B cell (primary cell): ENCODE measurements at regions of chr11 and their contacts with region 1.

Region 1: GRCh38 chr11:111926505-111927391 is 8.0 kb downstream of the C11orf52 start:
- DNase-seq: peak; percentile 96
- ATAC-seq: peak; percentile 90
- H3K4me3 ChIP-seq: peak overlapping the region; percentile 51 to 82 (median 66)
- H3K4me3 Mint-ChIP-seq: peak overlapping the region; percentile 92
- H3K27ac ChIP-seq: peak overlapping the region; percentile 67 to 89
- H3K27ac Mint-ChIP-seq: peak overlapping the region; percentile 93
- H3K4me1 ChIP-seq: peaks cover 9 to 17% of the 10 kb centered on the region in 2 donors
- H3K4me1 Mint-ChIP-seq: peaks cover 16% of the 10 kb centered on the region
- H3K27me3 ChIP-seq: peaks cover 0 to 4% (median 0%) of the 10 kb centered on the region in 4 experiments
- H3K27me3 Mint-ChIP-seq: peaks cover 9% of the 10 kb centered on the region
- CTCF ChIP-seq: no peak

Region 2: DNA sequence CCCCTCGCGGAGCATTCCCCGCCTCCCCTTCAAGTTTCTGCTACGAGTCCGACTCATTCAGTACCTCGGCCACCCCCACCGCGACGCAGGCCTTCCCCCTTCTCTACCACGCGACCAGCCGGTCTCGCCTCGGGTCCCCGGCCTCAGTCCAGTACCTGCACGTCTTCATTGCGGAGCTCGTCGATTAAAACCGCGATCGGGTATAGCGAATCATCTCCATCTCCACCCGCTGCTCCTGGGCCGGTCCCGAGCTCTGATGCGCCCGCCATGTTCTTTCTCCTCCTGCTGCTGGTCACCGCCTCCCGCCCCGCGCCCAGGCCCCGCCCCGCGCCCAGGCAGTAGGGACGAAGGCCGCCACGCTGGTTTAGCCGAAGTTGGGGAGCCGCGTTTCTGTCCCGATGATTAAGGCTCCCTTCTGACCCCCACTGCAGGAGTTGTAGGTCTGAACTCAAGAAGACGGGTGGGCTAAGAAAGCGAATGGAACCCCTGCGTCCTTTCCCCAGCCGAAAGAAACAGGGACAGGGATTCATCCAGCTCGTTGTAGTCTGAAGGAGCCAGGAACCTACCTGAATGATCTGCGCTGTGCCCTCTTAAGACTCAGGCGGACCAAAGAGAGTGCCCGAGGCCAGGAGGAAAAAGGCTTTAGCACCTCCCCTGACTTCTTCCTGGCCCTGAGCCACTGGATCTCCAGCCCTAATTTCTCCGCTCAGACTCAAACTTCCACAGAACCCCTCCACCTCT is 160.5 kb before region 1 on chr11 and contains the start of gene PPP2R1B:
- CTCF ChIA-PET with region 1: interaction called, 3 read pairs
- POLR2A ChIA-PET with region 1: no interaction called
- intact Hi-C with region 1: loop called (anchors 1 kb)
- DNase-seq: peak; percentile 88
- ATAC-seq: peak; percentile 97
- H3K4me3 ChIP-seq: peak within 1 kb of the TSS; percentile 74 to 97 (median 90)
- H3K4me3 Mint-ChIP-seq: peak within 1 kb of the TSS; percentile 100
- H3K27ac ChIP-seq: peak within 1 kb of the TSS; percentile 53 to 77
- H3K27ac Mint-ChIP-seq: peak within 1 kb of the TSS; percentile 97
- H3K4me1 ChIP-seq: peaks cover 9 to 16% of the 10 kb centered on the region in 2 donors
- H3K4me1 Mint-ChIP-seq: peaks cover 37% of the 10 kb centered on the region
- H3K27me3 ChIP-seq: no peaks in the 10 kb centered on the region
- H3K27me3 Mint-ChIP-seq: no peaks in the 10 kb centered on the region
- CTCF ChIP-seq: no peak
- total RNA-seq, gene PPP2R1B: 35.6 and 37.0 TPM in 2 replicates

Region 3: DNA sequence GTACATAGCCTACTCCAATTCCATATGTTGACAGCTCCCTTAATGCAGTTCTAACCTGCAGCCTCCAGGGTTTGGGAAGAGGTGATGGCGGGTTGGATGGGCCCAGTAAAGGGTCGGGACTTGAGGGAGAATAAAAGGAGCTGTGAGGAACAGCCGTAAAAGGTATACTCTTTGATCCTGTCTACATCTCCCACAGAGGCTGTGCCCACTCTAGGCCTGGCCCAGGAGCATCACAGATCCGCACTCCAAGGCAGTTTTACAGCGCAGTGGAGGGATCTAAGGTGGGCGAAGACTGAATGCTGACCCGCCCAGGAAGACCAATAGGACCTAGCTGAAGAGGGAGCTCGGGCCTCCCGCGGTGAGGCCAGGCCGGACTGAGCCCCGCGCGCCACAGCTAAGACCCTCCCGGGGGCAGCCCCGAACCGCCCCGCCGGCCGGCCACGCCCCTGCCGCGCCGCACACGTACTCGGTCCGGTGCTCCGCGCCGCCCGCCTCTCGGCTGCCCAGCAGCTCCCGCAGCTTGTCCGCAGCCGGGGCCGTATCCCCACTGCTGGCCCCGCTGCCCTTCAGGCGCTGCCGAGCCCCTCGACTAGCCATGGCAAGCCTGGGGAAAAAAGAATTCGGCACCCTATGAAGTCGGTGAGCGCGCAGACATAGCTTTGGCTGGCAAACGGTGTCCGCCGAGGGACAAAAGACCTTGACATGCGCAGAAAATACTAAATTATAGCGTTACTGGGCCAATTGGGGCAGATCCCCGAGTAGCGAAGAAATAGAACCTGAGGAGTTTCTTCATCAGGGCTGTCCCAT is 55.7 kb before region 1 on chr11 and contains the start of gene ALG9:
- CTCF ChIA-PET with region 1: interaction called, 5 read pairs
- POLR2A ChIA-PET with region 1: interaction called, 3 read pairs
- intact Hi-C with region 1: loop called (anchors 2 kb)
- DNase-seq: peak; percentile 94
- ATAC-seq: peak; percentile 94
- H3K4me3 ChIP-seq: peak within 1 kb of the TSS; percentile 62 to 81 (median 80)
- H3K4me3 Mint-ChIP-seq: peak within 1 kb of the TSS; percentile 94
- H3K27ac ChIP-seq: peak within 1 kb of the TSS; percentile 72 to 91
- H3K27ac Mint-ChIP-seq: peak within 1 kb of the TSS; percentile 94
- H3K4me1 ChIP-seq: peaks cover 13 to 14% of the 10 kb centered on the region in 2 donors
- H3K4me1 Mint-ChIP-seq: peaks cover 17% of the 10 kb centered on the region
- H3K27me3 ChIP-seq: no peaks in the 10 kb centered on the region
- H3K27me3 Mint-ChIP-seq: no peaks in the 10 kb centered on the region
- CTCF ChIP-seq: no peak
- total RNA-seq, gene ALG9: 23.9 and 29.9 TPM in 2 replicates

Region 4: GRCh38 chr11:112024773-112025678 is 98.3 kb after region 1 on chr11 and contains the start of gene DLAT:
- CTCF ChIA-PET with region 1: interaction called, 4 read pairs
- POLR2A ChIA-PET with region 1: no interaction called
- intact Hi-C with region 1: loop called (anchors 1 kb)
- DNase-seq: peak; percentile 90
- ATAC-seq: peak; percentile 83
- H3K4me3 ChIP-seq: peak within 1 kb of the TSS; percentile 76 to 100 (median 98)
- H3K4me3 Mint-ChIP-seq: peak within 1 kb of the TSS; percentile 100
- H3K27ac ChIP-seq: peak within 1 kb of the TSS; percentile 75 to 83
- H3K27ac Mint-ChIP-seq: peak within 1 kb of the TSS; percentile 98
- H3K4me1 ChIP-seq: peaks cover 18 to 20% of the 10 kb centered on the region in 2 donors
- H3K4me1 Mint-ChIP-seq: peaks cover 29% of the 10 kb centered on the region
- H3K27me3 ChIP-seq: no peaks in the 10 kb centered on the region
- H3K27me3 Mint-ChIP-seq: no peaks in the 10 kb centered on the region
- CTCF ChIP-seq: no peak
- total RNA-seq, gene DLAT: 19.8 and 21.1 TPM in 2 replicates

Region 5: DNA sequence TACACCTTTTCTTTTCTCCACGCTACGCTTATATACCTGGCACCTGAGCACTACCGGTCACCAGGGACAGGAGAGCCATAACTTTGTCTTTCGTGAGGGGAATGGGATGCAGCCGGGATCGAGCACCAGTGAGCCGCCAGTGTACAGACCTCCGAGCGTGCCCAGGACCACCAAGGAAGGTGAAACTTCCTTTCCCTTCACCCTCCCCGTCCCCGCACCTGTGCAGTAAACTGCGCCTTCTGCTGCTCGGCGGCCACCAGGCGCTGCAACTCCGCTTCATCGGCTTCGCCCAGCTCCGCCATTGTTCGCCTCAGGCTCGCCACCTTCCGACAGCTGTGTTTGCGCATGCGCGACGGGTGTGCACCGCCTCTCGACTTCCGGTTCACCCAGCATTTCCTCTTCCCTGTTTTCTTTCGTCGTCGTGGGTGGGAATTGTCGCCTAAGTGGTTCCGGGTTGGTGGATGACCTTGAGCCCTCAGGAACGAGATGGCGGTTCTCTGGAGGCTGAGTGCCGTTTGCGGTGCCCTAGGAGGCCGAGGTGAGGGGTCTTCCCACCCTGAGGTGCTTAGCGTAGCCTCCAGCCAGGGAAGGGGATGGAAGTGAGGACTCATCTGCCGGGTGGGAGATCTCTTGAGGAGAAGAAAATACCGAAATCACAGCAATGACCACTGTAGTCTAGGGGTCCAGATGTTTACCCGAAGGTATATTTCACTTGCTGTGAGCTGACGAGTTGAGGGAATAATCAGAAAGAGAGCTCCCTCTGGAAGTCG is 159.9 kb after region 1 on chr11 and contains the starts of genes SDHD and TIMM8B:
- CTCF ChIA-PET with region 1: interaction called, 5 read pairs
- POLR2A ChIA-PET with region 1: no interaction called
- intact Hi-C with region 1: loop called (anchors 1 kb)
- DNase-seq: peak; percentile 98
- ATAC-seq: peak; percentile 89
- H3K4me3 ChIP-seq: peak within 1 kb of the TSS; percentile 73 to 100 (median 97)
- H3K4me3 Mint-ChIP-seq: peak within 1 kb of the TSS; percentile 89
- H3K27ac ChIP-seq: peak within 1 kb of the TSS; percentile 77 to 91
- H3K27ac Mint-ChIP-seq: peak within 1 kb of the TSS; percentile 93
- H3K4me1 ChIP-seq: peaks cover 18 to 21% of the 10 kb centered on the region in 2 donors
- H3K4me1 Mint-ChIP-seq: peaks cover 42% of the 10 kb centered on the region
- H3K27me3 ChIP-seq: no peaks in the 10 kb centered on the region
- H3K27me3 Mint-ChIP-seq: no peaks in the 10 kb centered on the region
- CTCF ChIP-seq: peak; percentile 26
- total RNA-seq, gene SDHD: 55.0 and 57.7 TPM in 2 replicates
- total RNA-seq, gene TIMM8B: 22.4 and 25.5 TPM in 2 replicates

Region 6: DNA sequence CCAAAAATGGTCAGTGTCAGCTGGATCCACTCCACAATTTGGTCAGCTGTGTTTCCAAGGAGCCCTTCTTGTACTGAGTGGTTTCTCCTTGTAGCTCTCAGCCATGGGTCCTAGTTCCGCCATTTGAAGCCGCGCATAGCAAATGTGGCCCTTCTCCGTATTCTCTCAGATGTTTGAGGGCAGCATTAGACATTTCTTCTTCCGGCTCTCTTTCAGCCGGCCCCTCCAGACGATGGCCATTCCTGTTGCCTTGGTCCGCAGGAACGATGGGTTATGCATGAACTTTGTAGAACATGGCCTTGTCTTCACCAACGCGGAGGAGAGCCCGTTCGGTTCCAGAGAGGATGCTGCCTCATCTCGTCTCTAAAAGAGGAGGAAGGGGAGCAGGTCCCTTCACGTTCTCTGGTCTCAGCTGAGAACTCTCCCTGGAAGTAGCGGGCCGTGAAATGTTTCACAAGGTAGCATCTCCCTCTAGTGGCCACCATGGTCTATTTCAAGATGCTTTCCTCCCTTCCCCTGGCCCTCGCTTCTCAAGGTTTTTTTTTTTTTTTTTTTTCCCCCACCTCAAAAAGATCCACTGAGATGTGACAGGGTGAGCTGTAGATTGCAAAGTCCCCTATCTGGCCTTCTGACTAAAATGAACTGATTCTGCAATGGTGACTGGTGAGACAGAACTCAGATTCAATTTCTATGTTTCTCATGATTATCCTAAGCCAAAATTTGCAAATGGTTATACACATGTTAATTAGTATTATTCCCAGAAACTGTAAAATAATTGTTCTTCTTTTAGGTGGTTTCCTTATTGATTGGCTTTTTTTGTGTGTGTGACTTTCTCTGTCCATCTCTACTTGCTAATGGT is 353.7 kb after region 1 on chr11:
- CTCF ChIA-PET with region 1: interaction called, 9 read pairs
- POLR2A ChIA-PET with region 1: no interaction called
- intact Hi-C with region 1: loop called (anchors 1 kb)
- DNase-seq: peak; percentile 87
- ATAC-seq: peak; percentile 93
- H3K4me3 ChIP-seq: peak overlapping the region; percentile 59 to 80 (median 69)
- H3K4me3 Mint-ChIP-seq: peak overlapping the region; percentile 98
- H3K27ac ChIP-seq: peak overlapping the region in 1 of 2 donors; percentile 20
- H3K27ac Mint-ChIP-seq: peak overlapping the region; percentile 87
- H3K4me1 ChIP-seq: peaks cover 7 to 15% of the 10 kb centered on the region in 2 donors
- H3K4me1 Mint-ChIP-seq: peaks cover 18% of the 10 kb centered on the region
- H3K27me3 ChIP-seq: no peaks in the 10 kb centered on the region
- H3K27me3 Mint-ChIP-seq: no peaks in the 10 kb centered on the region
- CTCF ChIP-seq: peak; percentile 64